Activated CD4-positive, alpha-beta memory T cell treated with anti-CD3 and anti-CD28 coated beads, Interleukin-2, amount 10 ng/mL, durations not matched to agents 7 days and 5 days (primary cell): ENCODE measurements at regions of chr10 and their contacts with region 1.

Region 1: GRCh38 chr10:103845972-103846371 is 9.4 kb downstream of the SH3PXD2A start:
- DNase-seq: peak; percentile 76
- H3K4me3 Mint-ChIP-seq: peak overlapping the region; percentile 18
- H3K27ac Mint-ChIP-seq: peak overlapping the region; percentile 85
- H3K4me1 Mint-ChIP-seq: peaks cover 46% of the 10 kb centered on the region
- H3K27me3 Mint-ChIP-seq: peaks cover 25% of the 10 kb centered on the region

Region 2: GRCh38 chr10:103759100-103759781 is 86.7 kb before region 1 on chr10:
- CTCF ChIA-PET with region 1: interaction called, 12 read pairs
- POLR2A ChIA-PET with region 1: interaction called, 3 read pairs
- DNase-seq: peak; percentile 51
- H3K4me3 Mint-ChIP-seq: no peak overlapping the region
- H3K27ac Mint-ChIP-seq: peak overlapping the region; percentile 75
- H3K4me1 Mint-ChIP-seq: peaks cover 67% of the 10 kb centered on the region
- H3K27me3 Mint-ChIP-seq: no peaks in the 10 kb centered on the region